K562 (cell line): ENCODE measurements at regions of chr12 and their contacts with region 1.

Region 1: DNA sequence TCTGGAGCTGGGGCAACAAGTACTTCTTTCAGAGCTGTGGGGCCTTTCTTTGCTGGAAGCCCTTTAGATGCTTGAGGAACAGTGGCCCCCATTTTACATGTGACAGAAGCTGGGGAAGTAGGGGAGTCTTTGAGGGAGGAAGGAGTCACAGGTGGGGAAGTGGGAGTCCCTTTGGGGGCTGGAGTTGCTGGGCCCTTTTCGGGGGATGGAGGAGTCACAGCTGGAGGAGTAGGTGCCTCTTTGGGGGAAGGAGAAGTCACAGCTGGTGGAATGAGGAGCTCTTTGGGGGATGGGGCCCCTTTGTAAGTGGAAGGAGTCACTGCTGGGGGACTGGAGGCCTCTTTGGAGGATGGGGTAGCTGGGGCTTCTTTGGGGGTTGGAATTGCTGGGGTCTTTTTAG is 8.6 kb downstream of the NACA start:
- DNase-seq: peak in 2 of 4 experiments; percentile 25 to 32
- ATAC-seq: no peak
- H3K4me3 ChIP-seq: no peak overlapping the region
- H3K27ac ChIP-seq: peak overlapping the region; percentile 19; the same call in 1 of the 3 replicates
- H3K4me1 ChIP-seq: peaks cover 22 to 28% of the 10 kb centered on the region in 2 experiments
- H3K27me3 ChIP-seq: no peaks in the 10 kb centered on the region
- CTCF ChIP-seq: no peak
- EP300 ChIP-seq: no peak
- POLR2A ChIP-seq: peak; percentile 7; the same call in 1 of the 2 replicates
- RAD21 ChIP-seq: no peak

Region 2: DNA sequence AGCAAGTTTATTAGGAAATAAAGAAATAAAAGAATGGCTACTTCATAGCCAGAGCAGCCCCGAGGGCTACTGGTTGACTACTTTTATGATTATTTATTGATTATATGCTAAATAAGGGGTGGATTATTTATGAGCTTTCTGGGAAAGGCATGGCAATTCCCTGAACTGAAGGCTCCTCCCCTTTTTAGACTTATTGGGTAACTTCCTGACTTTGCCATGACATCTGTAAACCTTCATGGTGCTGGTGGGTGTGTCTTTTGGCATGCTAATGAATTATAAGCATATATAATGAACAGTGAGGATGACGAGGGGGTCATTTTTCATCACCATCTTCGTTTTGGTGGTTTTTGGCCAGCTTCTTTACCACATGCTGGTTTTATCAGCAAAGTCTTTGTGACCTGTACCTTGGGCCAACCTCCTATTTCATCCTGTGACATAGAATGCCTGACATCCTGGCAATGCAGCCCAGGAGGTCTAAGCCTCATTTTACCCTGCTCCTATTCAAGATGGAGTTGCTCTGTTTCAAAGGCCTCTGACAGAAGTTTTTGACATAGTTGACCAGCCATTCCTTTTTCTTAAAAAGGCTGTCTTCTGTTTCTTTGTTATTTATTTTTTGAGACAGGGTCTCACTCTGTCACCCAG is 17.3 kb before region 1 on chr12:
- CTCF ChIA-PET with region 1: no interaction called
- POLR2A ChIA-PET with region 1: interaction called, 12 read pairs
- in situ Hi-C with region 1: no loop called
- intact Hi-C with region 1: no loop called
- DNase-seq: peak in 2 of 4 experiments; percentile 58 to 81
- ATAC-seq: peak; percentile 79
- H3K4me3 ChIP-seq: no peak overlapping the region
- H3K27ac ChIP-seq: peak overlapping the region; percentile 80
- H3K4me1 ChIP-seq: peaks cover 28 to 35% of the 10 kb centered on the region in 2 experiments
- H3K27me3 ChIP-seq: no peaks in the 10 kb centered on the region
- CTCF ChIP-seq: no peak
- EP300 ChIP-seq: peak; percentile 36
- POLR2A ChIP-seq: no peak
- RAD21 ChIP-seq: no peak